ENCODE measurements at regions of chr2 and their contacts with region 1.

Region 1: GRCh38 chr2:9967053-9967775 is 15.7 kb downstream of the GRHL1 start:
- DNase-seq: no peak
- ATAC-seq: peak; percentile 95
- H3K4me3 Mint-ChIP-seq: no peak overlapping the region
- H3K27ac Mint-ChIP-seq: no peak overlapping the region
- H3K4me1 Mint-ChIP-seq: peaks cover 18% of the 10 kb centered on the region
- H3K27me3 Mint-ChIP-seq: peaks cover 2% of the 10 kb centered on the region
- CTCF ChIP-seq: no peak

Region 2: GRCh38 chr2:9951272-9951972 is 15.8 kb before region 1 on chr2 and contains the start of gene GRHL1:
- CTCF ChIA-PET with region 1: no interaction called
- POLR2A ChIA-PET with region 1: no interaction called
- intact Hi-C with region 1: loop called (anchors 1 kb)
- DNase-seq: peak; percentile 89
- ATAC-seq: peak; percentile 96
- H3K4me3 Mint-ChIP-seq: peak within 1 kb of the TSS; percentile 84
- H3K27ac Mint-ChIP-seq: peak within 1 kb of the TSS; percentile 65
- H3K4me1 Mint-ChIP-seq: peaks cover 14% of the 10 kb centered on the region
- H3K27me3 Mint-ChIP-seq: peaks cover 37% of the 10 kb centered on the region
- CTCF ChIP-seq: no peak
- total RNA-seq, gene GRHL1: 0.39 and 0.95 TPM in 2 replicates

Measured in activated B cell treated with CpG ODN at 0.5 μM for 24 hours (primary cell).